Calu3 (cell line): ENCODE measurements at regions of chr7 and their contacts with region 1.

Region 1: GRCh38 chr7:143901668-143902331 is at the start of gene TCAF1:
- DNase-seq: peak; percentile 93
- H3K4me3 Mint-ChIP-seq: peak within 1 kb of the TSS; percentile 88
- H3K27ac Mint-ChIP-seq: peak within 1 kb of the TSS; percentile 83
- H3K4me1 Mint-ChIP-seq: peaks cover 33% of the 10 kb centered on the region
- H3K27me3 Mint-ChIP-seq: no peaks in the 10 kb centered on the region
- CTCF ChIP-seq: peak; percentile 28
- total RNA-seq, gene TCAF1: 26.7 and 27.1 TPM in 2 replicates

Region 2: DNA sequence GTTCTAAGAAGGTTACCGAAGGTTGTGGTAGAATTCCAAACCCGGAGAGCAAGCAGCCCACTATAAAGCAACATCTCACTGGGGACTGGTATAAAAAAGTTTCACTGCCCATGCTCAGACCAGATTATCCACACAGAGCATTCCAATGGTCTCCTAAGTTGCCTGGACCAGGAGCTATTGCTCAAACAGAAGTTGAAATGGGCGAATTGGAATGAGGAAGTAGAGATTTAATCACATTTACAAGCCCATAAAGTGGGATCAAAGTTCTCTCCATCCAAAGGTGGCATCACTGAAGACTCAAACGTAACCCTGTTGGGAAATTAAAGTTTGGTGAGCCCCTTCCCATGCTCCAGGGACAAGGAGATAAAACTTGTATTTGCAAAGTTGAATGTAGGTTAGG is 72.7 kb after region 1 on chr7:
- CTCF ChIA-PET with region 1: interaction called, 11 read pairs
- intact Hi-C with region 1: loop called (anchors 5 kb)
- DNase-seq: peak; percentile 23
- H3K4me3 Mint-ChIP-seq: no peak overlapping the region
- H3K27ac Mint-ChIP-seq: no peak overlapping the region
- H3K4me1 Mint-ChIP-seq: peaks cover 26% of the 10 kb centered on the region
- H3K27me3 Mint-ChIP-seq: no peaks in the 10 kb centered on the region
- CTCF ChIP-seq: no peak

Region 3: GRCh38 chr7:144027070-144027469 is 125.3 kb after region 1 on chr7:
- CTCF ChIA-PET with region 1: interaction called, 8 read pairs
- intact Hi-C with region 1: loop called (anchors 2 kb)
- DNase-seq: no peak
- H3K4me3 Mint-ChIP-seq: no peak overlapping the region
- H3K27ac Mint-ChIP-seq: no peak overlapping the region
- H3K4me1 Mint-ChIP-seq: no peaks in the 10 kb centered on the region
- H3K27me3 Mint-ChIP-seq: no peaks in the 10 kb centered on the region
- CTCF ChIP-seq: no peak

Region 4: DNA sequence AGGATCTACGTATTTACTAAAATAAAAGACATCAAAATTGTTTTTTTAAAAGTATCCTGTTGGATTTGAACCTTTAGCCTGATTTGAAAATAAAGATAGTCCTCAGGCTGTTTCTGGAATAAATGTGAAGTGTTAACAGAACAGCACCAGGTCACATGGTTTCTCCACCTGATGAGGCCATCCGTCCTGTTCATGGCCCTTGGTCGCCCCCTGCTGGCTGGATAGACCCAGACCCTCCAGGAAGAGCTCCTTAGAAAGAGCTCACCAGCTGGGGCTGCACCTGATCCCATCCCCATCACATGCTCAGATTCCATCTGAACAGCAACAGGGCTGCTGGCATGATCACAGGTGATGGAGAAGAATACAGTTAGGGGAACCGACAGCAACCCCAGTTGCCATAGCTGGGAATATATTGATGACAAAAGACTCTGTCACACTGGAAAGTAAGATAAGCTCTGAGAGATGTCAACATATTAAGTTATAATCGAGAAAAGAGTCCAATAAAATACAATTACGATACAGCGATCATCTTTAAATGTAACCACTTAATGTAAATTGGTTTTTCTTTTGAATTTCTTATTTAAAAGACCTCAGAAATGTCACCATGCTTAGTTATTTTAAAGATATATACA is 226.0 kb after region 1 on chr7:
- CTCF ChIA-PET with region 1: interaction called, 16 read pairs
- intact Hi-C with region 1: loop called (anchors 5 kb)
- DNase-seq: peak; percentile 94
- H3K4me3 Mint-ChIP-seq: no peak overlapping the region
- H3K27ac Mint-ChIP-seq: no peak overlapping the region
- H3K4me1 Mint-ChIP-seq: no peaks in the 10 kb centered on the region
- H3K27me3 Mint-ChIP-seq: no peaks in the 10 kb centered on the region
- CTCF ChIP-seq: peak; percentile 90